Tibial artery (tissue), 4 donors: ENCODE measurements at regions of chr14 and their contacts with region 1.

Region 1: GRCh38 chr14:104976198-104977007 is 1.8 kb downstream of the AHNAK2 start:
- DNase-seq: peak; percentile 75 to 90
- H3K4me3 ChIP-seq: no peak overlapping the region
- H3K27ac ChIP-seq: peak overlapping the region; percentile 93 to 97
- H3K4me1 ChIP-seq: peaks cover 7 to 85% (median 73%) of the 10 kb centered on the region in 4 donors
- H3K27me3 ChIP-seq: no peaks in the 10 kb centered on the region
- CTCF ChIP-seq: peak; percentile 83 to 86

Region 2: DNA sequence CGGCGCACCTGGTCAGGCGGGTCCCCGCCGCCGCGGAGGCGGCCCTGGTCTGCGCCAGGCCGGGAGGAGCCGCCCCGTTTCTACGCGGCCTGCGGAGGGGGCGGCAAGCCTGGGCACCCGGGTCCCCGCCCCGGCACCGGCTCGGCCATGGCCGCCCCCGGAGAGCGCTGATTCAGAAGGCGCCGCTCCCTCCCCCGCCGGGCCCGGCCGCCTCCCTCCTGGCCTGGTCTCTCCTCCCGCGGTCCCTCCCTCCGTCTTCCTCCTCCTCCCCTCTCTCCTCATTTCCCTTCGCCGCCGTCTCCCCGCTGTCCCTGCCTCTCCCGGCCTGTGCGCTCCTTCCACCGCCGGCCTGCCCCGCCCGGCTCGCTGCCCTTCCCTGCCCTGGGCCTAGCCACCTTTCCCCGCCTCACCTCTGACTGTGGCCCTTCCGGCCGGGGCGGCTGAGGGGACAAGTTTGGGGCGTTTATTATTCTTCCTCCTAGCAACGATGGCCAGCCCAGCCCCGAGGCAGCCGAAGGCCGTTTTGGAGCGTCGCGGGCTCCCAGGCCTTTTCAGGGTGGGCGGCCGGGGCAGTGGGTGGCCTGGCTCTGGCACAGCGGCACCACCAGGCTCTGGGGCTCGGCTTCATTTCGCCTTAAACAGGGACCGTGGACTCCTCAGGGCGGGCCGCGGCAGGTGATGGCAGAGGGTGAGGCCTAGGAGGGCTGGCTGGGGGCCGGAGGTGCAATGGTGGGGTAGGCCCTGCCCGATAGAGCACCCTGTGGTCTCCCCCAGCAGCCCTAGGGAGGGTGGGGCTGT is 110.6 kb before region 1 on chr14:
- intact Hi-C with region 1: loop called (anchors 10 kb)
- DNase-seq: peak; percentile 76 to 89
- H3K4me3 ChIP-seq: peak overlapping the region; percentile 68 to 78
- H3K27ac ChIP-seq: peak overlapping the region; percentile 65 to 68
- H3K4me1 ChIP-seq: peaks cover 8 to 38% (median 24%) of the 10 kb centered on the region in 4 donors
- H3K27me3 ChIP-seq: peaks cover 0 to 3% of the 10 kb centered on the region in 2 donors
- CTCF ChIP-seq: no peak

Region 3: GRCh38 chr14:105020815-105021655 is 44.6 kb after region 1 on chr14 and contains the start of gene CDCA4:
- intact Hi-C with region 1: loop called (anchors 5 kb)
- DNase-seq: peak; percentile 96 to 98
- H3K4me3 ChIP-seq: peak within 1 kb of the TSS; percentile 90 to 94
- H3K27ac ChIP-seq: peak within 1 kb of the TSS; percentile 73 to 83
- H3K4me1 ChIP-seq: peaks cover 0 to 34% (median 26%) of the 10 kb centered on the region in 4 donors
- H3K27me3 ChIP-seq: no peaks in the 10 kb centered on the region
- CTCF ChIP-seq: no peak

Region 4: DNA sequence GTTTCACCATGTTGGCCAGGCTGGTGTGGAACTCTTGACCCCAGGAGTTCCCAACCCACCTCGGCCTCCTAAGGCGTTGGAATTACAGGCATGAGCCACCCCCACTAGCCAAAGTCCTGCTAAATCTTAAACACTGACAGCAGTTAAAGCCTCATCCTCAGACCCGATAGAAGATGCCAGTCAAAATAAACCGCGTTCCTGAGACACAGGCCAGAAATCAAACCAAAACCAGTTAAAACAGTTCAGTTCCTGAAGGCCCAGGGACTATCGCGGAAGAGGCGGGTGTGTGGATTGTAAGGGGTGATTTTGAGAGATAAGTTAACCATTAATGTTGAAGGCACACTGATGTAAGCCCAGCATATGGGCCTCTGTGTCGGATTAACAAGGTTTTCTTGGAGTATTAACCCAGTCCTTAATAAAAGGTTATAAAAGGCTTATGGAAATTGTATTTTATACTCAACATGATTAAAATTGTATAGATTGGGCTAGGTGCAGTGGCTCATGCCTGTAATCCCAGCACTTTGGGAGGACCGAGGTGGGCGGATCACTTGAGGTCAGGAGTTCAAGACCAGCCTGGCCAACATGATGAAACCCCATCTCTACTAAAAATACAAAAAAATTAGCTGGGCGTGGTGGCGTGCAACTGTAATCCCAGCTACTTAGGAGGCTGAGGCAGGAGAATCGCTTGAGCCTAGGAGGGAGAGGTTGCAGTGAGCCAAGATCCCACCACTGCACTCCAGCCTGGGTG is 63.2 kb after region 1 on chr14:
- intact Hi-C with region 1: loop called (anchors 2 kb)
- DNase-seq: no peak
- H3K4me3 ChIP-seq: no peak overlapping the region
- H3K27ac ChIP-seq: no peak overlapping the region
- H3K4me1 ChIP-seq: no peaks in the 10 kb centered on the region
- H3K27me3 ChIP-seq: peaks cover 0 to 31% of the 10 kb centered on the region in 2 donors
- CTCF ChIP-seq: no peak

Region 5: GRCh38 chr14:105086833-105087307 is 110.5 kb after region 1 on chr14:
- intact Hi-C with region 1: loop called (anchors 5 kb)
- DNase-seq: peak; percentile 80 to 84
- H3K4me3 ChIP-seq: peak overlapping the region; percentile 43 to 61
- H3K27ac ChIP-seq: peak overlapping the region; percentile 74 to 98
- H3K4me1 ChIP-seq: peaks cover 8 to 55% (median 46%) of the 10 kb centered on the region in 4 donors
- H3K27me3 ChIP-seq: no peaks in the 10 kb centered on the region
- CTCF ChIP-seq: peak; percentile 72 to 75